ENCODE measurements at regions of chr17 and their contacts with region 1.

Region 1: GRCh38 chr17:60036796-60037612 is 41.7 kb downstream of the HEATR6 start:
- DNase-seq: peak; percentile 80
- ATAC-seq: peak; percentile 94
- H3K4me3 ChIP-seq: no peak overlapping the region
- H3K4me3 Mint-ChIP-seq: no peak overlapping the region
- H3K27ac ChIP-seq: no peak overlapping the region
- H3K27ac Mint-ChIP-seq: no peak overlapping the region
- H3K4me1 ChIP-seq: peaks cover 3 to 6% of the 10 kb centered on the region in 2 donors
- H3K4me1 Mint-ChIP-seq: peaks cover 5% of the 10 kb centered on the region
- H3K27me3 ChIP-seq: peaks cover 0 to 11% (median 4%) of the 10 kb centered on the region in 4 experiments
- H3K27me3 Mint-ChIP-seq: peaks cover 10% of the 10 kb centered on the region
- CTCF ChIP-seq: peak; percentile 96

Region 2: DNA sequence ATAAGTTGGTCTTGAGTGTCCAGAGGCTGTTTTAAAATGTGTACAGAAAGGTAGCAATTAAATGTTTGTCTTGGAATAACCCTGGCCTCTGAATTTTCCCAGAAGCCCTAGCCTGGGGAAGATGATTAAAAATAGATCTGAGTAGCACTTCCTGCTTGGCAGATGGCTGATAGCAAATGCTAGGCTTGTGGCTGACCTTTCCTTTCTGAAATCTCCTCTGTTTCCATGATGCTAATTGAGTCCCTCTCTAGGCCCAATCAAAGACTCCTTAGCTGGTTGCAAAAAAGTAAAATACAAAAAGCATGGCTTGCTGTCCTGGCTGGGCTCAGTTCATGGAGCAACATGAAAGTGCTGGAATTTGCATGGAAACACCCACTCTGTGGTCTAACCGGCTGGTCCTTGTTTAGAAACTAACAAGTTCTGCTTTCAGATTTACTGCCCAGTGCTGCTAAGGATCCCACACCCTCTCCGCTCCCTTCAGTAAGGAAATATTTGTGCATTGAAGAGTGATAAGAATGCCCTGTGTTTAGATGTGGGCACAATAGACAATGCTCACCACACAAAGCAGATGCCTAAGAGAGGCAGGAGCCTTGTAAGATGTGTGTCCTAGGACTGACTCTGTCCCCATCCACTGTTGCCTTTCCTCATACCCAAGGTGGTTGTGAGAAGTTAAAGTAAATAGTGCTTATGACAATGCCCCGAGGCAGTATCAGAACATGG is 664.7 kb before region 1 on chr17:
- CTCF ChIA-PET with region 1: no interaction called
- POLR2A ChIA-PET with region 1: no interaction called
- intact Hi-C with region 1: no loop called
- DNase-seq: peak; percentile 40
- ATAC-seq: peak; percentile 46
- H3K4me3 ChIP-seq: peak overlapping the region in 2 of 5 experiments; percentile 2 to 46
- H3K4me3 Mint-ChIP-seq: peak overlapping the region; percentile 66
- H3K27ac ChIP-seq: peak overlapping the region; percentile 55 to 71
- H3K27ac Mint-ChIP-seq: peak overlapping the region; percentile 88
- H3K4me1 ChIP-seq: peaks cover 69 to 94% of the 10 kb centered on the region in 2 donors
- H3K4me1 Mint-ChIP-seq: peaks cover 82% of the 10 kb centered on the region
- H3K27me3 ChIP-seq: no peaks in the 10 kb centered on the region
- H3K27me3 Mint-ChIP-seq: no peaks in the 10 kb centered on the region
- CTCF ChIP-seq: no peak

Region 3: DNA sequence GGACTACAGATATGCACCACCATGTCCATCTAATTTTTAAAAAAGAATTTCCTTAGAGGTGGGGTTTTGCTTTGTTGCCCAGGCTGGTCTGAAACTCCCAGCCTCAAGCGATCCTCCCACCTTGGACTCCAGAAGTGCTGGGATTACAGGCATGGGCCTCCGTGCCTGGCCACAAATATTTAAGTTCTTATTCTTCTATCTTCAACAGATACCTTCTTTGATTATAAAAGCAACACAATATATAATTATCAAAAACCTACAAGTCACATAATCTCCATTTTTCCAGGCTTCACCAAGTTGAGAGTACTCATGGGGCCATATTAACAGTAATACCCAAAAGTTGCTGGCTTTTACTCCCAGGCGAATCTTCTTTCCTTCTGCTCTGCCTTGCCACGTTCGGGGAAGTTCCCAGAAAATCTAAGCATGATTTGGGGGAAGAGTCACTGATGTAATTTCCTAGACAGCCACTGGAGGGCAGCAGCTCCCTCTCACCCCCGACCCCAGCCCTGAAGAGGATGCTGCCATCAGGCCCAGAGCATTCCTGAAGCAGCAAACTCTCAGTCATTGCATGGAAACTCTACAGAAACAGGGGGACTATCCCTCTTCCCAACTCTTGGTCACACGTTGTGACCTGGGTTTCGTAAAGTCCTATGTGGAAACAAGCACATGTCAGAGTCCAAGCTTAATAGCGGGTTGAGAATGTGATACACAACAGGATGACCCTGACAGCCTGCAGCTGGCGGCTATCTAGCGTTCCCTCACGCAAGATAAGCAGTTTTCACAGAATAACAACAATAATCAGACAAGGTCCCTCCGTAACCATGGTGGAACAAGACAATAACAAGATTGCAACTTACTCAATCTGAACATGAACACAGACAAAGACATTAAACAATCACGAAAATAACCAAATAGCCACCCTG is 515.5 kb before region 1 on chr17:
- CTCF ChIA-PET with region 1: no interaction called
- POLR2A ChIA-PET with region 1: no interaction called
- intact Hi-C with region 1: loop called (anchors 5 kb)
- DNase-seq: peak; percentile 76
- ATAC-seq: peak; percentile 53
- H3K4me3 ChIP-seq: no peak overlapping the region
- H3K4me3 Mint-ChIP-seq: no peak overlapping the region
- H3K27ac ChIP-seq: no peak overlapping the region
- H3K27ac Mint-ChIP-seq: no peak overlapping the region
- H3K4me1 ChIP-seq: peaks cover 0 to 2% of the 10 kb centered on the region in 2 donors
- H3K4me1 Mint-ChIP-seq: peaks cover 4% of the 10 kb centered on the region
- H3K27me3 ChIP-seq: peaks cover 0 to 2% (median 0%) of the 10 kb centered on the region in 4 experiments
- H3K27me3 Mint-ChIP-seq: peaks cover 28% of the 10 kb centered on the region
- CTCF ChIP-seq: peak; percentile 93

Region 4: GRCh38 chr17:59746849-59747445 is 290.1 kb before region 1 on chr17:
- CTCF ChIA-PET with region 1: interaction called, 18 read pairs
- POLR2A ChIA-PET with region 1: interaction called, 5 read pairs
- intact Hi-C with region 1: loop called (anchors 5 kb)
- DNase-seq: peak; percentile 45
- ATAC-seq: peak; percentile 36
- H3K4me3 ChIP-seq: no peak overlapping the region
- H3K4me3 Mint-ChIP-seq: no peak overlapping the region
- H3K27ac ChIP-seq: no peak overlapping the region
- H3K27ac Mint-ChIP-seq: no peak overlapping the region
- H3K4me1 ChIP-seq: peaks cover 0 to 1% of the 10 kb centered on the region in 2 donors
- H3K4me1 Mint-ChIP-seq: no peaks in the 10 kb centered on the region
- H3K27me3 ChIP-seq: no peaks in the 10 kb centered on the region
- H3K27me3 Mint-ChIP-seq: no peaks in the 10 kb centered on the region
- CTCF ChIP-seq: peak; percentile 79

Region 5: DNA sequence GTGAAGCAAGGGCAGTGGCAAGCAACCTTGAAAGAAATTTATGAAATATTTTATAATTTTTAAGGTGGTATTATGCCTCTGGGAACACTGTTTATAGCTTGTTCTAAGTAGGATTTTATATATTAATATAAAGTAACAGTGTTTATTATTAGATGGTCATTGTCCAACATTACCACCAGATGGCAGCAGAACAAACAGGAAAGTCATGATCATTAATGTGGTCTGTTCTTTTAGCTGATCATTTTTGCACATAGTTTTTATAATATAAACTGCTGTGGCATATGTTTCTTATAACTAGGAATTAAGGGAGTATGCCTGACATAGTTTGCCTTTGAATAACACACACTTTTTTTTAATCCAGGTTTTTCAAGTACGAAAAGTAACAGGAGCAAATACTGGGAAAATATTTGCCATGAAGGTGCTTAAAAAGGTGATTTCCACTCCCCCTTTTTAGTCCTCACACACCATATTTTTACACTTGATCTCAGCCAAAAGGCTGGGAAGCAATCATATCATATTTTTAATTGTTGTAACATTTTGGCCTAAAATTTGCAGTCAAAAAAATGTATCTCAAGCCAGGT is 122.6 kb before region 1 on chr17:
- CTCF ChIA-PET with region 1: interaction called, 41 read pairs
- POLR2A ChIA-PET with region 1: no interaction called
- intact Hi-C with region 1: loop called (anchors 5 kb)
- DNase-seq: peak; percentile 61
- ATAC-seq: peak; percentile 51
- H3K4me3 ChIP-seq: no peak overlapping the region
- H3K4me3 Mint-ChIP-seq: no peak overlapping the region
- H3K27ac ChIP-seq: no peak overlapping the region
- H3K27ac Mint-ChIP-seq: no peak overlapping the region
- H3K4me1 ChIP-seq: no peaks in the 10 kb centered on the region
- H3K4me1 Mint-ChIP-seq: no peaks in the 10 kb centered on the region
- H3K27me3 ChIP-seq: no peaks in the 10 kb centered on the region
- H3K27me3 Mint-ChIP-seq: no peaks in the 10 kb centered on the region
- CTCF ChIP-seq: peak; percentile 77

Measured in B cell (primary cell).